ENCODE measurements at regions of chr15 and their contacts with region 1.

Region 1: GRCh38 chr15:84633311-84634227 is 20.5 kb downstream of the WDR73 start:
- DNase-seq: peak; percentile 80
- ATAC-seq: peak; percentile 51
- H3K4me3 Mint-ChIP-seq: peak overlapping the region; percentile 95
- H3K27ac Mint-ChIP-seq: peak overlapping the region; percentile 95
- H3K4me1 Mint-ChIP-seq: peaks cover 34% of the 10 kb centered on the region
- H3K27me3 Mint-ChIP-seq: no peaks in the 10 kb centered on the region

Region 2: DNA sequence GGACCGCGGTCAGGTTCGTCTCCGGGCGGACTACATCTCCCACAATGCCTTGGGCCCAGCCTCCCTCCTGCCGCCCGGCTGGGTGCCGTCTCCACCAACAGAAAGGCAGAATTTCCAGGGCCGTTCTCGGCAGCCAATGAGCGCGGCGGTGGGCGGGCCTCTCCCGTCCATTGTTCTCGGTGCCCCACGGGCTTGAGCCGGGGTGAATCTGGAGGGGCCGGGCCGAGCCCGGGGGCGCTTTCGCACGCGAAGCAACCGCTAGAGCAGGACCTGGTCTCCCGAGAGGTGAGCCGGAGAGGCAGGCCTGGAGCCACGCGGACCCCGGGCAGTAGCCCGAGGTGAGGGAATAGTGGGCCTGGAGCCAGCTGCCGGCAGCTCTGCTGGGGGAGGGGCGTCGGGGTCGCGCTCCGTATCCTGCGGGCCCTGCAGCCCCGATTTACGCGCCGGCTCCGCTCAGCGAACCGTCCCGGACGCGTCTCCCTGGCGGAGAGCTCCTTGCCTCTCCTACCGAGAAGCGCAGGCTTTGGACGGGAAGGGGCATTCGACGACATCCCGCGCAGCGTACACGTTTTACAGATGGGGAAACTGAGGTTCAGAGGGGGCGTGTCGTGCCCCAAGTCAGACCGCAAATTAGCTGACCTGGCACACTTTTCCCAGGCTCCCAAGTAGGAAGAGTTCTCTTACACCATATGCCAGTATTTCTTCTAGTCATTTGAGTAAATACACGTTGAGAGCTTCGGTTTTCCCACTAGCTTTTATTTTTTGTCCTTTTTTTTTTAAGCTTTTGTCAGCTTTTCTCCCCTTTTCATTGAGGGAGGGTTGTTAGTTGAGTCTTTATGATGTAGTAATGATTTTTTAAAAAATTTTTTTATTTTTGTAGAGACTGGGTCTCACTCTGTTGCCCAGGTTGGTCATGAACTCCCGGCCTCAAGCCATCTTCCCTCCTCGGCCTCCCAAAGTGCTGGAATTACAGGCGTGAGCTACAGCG is 32.4 kb before region 1 on chr15 and contains the start of gene ZSCAN2:
- POLR2A ChIA-PET with region 1: interaction called, 50 read pairs
- DNase-seq: peak; percentile 93
- ATAC-seq: peak; percentile 96
- H3K4me3 Mint-ChIP-seq: peak within 1 kb of the TSS; percentile 96
- H3K27ac Mint-ChIP-seq: peak within 1 kb of the TSS; percentile 69
- H3K4me1 Mint-ChIP-seq: peaks cover 49% of the 10 kb centered on the region
- H3K27me3 Mint-ChIP-seq: no peaks in the 10 kb centered on the region
- total RNA-seq, gene ZSCAN2: 9.6 to 10.9 TPM

Region 3: GRCh38 chr15:84621358-84621979 is 12.1 kb before region 1 on chr15:
- POLR2A ChIA-PET with region 1: interaction called, 14 read pairs
- DNase-seq: no peak
- ATAC-seq: no peak
- H3K4me3 Mint-ChIP-seq: no peak overlapping the region
- H3K27ac Mint-ChIP-seq: no peak overlapping the region
- H3K4me1 Mint-ChIP-seq: no peaks in the 10 kb centered on the region
- H3K27me3 Mint-ChIP-seq: no peaks in the 10 kb centered on the region

Region 4: DNA sequence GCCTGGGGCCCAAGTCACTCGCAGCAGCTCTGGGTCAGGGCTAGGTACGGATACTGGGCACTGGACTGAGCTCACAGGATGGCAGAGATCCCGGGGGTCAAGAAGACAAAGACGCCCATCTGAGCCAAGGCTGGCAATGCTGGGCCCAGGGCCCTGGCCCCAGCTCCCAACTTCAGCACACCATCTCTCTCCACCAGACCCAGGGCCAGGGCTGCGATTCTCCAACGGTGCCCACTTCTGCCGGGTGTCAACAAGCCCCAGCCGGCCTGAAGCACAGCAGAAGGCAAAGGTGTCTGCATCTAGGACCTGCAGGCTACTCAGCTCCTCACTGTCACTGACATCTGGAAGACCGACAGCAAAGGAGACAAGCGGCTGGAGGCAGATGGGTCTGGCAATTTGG is 11.9 kb after region 1 on chr15:
- POLR2A ChIA-PET with region 1: no interaction called
- DNase-seq: no peak
- ATAC-seq: no peak
- H3K4me3 Mint-ChIP-seq: no peak overlapping the region
- H3K27ac Mint-ChIP-seq: no peak overlapping the region
- H3K4me1 Mint-ChIP-seq: peaks cover 16% of the 10 kb centered on the region
- H3K27me3 Mint-ChIP-seq: no peaks in the 10 kb centered on the region

Region 5: DNA sequence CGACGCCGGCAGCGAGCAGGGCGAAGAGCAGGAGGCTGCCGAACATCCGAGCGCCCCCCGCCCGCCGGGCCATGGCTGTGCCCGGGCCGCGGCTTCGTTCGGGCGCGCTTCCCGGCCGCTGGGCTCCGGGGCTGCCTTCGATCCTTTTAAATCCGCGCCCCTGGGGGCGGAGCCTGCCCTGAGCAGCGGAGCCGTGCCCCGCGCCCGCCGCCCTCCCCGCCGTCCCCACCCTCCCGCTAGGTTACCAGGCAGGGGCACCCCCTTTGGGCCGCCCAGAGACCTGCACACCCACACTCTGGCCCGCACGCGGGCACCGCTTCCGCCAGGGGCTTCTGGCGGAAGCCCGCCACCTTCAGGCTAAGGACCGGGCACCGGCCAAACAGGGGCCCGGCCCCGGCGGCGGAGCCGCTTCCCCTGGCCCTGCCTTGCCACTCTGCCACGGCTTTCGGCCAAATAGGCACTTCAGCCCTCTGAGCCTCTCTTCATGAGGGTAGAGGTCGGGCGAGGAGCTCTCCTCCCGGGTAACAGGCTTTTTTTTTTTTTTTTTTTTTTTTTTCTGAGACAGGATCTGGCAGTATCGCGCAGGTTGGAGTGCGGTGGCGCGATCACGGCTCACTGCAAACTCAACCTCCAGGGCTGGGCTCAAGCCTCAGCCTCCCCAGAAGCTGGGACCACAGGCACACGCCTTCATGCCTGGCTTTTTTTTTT is 24.7 kb after region 1 on chr15 and contains the start of gene NMB:
- POLR2A ChIA-PET with region 1: interaction called, 15 read pairs
- DNase-seq: peak; percentile 86
- ATAC-seq: peak; percentile 71
- H3K4me3 Mint-ChIP-seq: peak within 1 kb of the TSS; percentile 80
- H3K27ac Mint-ChIP-seq: peak within 1 kb of the TSS; percentile 73
- H3K4me1 Mint-ChIP-seq: peaks cover 14% of the 10 kb centered on the region
- H3K27me3 Mint-ChIP-seq: no peaks in the 10 kb centered on the region
- total RNA-seq, gene NMB: 1.1 to 1.7 TPM

Region 6: GRCh38 chr15:84699538-84700191 is 66.1 kb after region 1 on chr15:
- POLR2A ChIA-PET with region 1: no interaction called
- DNase-seq: no peak
- ATAC-seq: no peak
- H3K4me3 Mint-ChIP-seq: no peak overlapping the region
- H3K27ac Mint-ChIP-seq: peak overlapping the region; percentile 6
- H3K4me1 Mint-ChIP-seq: peaks cover 21% of the 10 kb centered on the region
- H3K27me3 Mint-ChIP-seq: no peaks in the 10 kb centered on the region

Region 7: GRCh38 chr15:84734794-84735479 is 101.4 kb after region 1 on chr15:
- POLR2A ChIA-PET with region 1: interaction called, 10 read pairs
- DNase-seq: peak; percentile 65
- ATAC-seq: peak; percentile 80
- H3K4me3 Mint-ChIP-seq: peak overlapping the region; percentile 88
- H3K27ac Mint-ChIP-seq: peak overlapping the region; percentile 93
- H3K4me1 Mint-ChIP-seq: peaks cover 39% of the 10 kb centered on the region
- H3K27me3 Mint-ChIP-seq: no peaks in the 10 kb centered on the region